Activated CD4-positive, alpha-beta memory T cell treated with anti-CD3 and anti-CD28 coated beads for 36 hours (primary cell): ENCODE measurements at regions of chr2 and their contacts with region 1.

Region 1: DNA sequence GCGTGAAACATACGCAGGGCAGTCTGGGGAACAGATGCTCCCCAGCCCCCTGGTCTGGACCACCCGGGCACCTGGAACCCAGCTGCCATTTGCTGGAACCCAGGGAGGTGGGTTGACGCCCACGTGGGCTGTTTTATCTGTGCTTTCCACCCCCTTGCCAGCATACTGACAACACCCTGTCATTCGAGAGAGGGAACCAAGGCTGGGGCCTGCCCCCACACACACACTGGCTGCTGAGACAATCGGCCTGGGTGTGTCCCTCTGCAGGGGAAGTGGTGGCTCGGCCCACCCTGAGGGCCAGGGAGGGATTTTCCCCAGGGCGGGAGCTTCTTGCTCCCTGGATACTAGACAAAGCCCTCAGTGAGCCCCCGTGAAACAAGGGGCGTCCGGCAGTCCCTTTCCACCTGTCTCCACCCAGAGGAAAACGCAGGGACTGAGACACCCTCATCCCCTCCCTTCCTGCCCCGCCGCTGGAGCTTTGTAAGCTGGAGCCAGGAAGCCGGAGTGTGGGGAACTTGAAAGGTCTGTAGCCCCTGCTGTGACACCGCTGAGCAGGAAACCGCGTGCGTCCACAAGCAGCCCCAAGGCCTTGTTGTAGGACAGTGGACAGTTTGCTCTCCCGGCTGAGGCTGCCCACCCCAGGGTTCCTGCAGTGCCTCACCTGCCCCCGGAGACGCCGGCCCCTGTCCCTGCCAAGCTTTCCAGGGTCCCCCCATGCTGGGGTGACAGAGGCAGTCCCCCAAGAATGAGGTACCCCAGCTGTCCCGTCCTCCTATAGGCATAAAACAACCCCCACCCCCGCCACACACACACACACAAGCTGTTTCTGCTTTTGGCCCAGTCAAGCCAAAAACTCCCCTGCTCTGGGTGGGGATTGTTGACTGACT is 14.1 kb upstream of the KLF11 start:
- DNase-seq: peak; percentile 73
- H3K4me3 Mint-ChIP-seq: no peak overlapping the region
- H3K27ac Mint-ChIP-seq: no peak overlapping the region
- H3K4me1 Mint-ChIP-seq: peaks cover 19% of the 10 kb centered on the region
- H3K27me3 Mint-ChIP-seq: no peaks in the 10 kb centered on the region

Region 2: DNA sequence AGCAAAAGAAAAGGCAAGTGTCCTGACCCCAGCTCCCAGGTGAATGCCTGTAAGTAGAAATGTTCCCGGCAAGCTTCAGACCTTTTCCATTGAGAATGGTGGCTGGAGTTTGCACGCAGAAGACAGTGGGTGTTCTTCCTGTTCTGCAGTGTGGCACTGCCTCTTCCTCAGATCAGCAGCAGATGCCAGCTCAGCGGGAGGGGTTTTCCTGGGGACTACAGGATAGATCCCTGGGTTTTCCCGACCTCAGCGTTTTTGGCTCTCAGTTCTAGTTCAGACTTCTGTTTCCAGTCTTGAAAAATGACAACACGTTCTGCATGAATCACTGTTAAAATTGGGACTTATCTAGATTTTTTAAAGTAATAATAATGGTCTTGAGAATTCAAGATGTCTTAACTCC is 38.5 kb before region 1 on chr2:
- CTCF ChIA-PET with region 1: interaction called, 44 read pairs
- POLR2A ChIA-PET with region 1: no interaction called
- intact Hi-C with region 1: loop called (anchors 5 kb)
- DNase-seq: peak; percentile 33
- H3K4me3 Mint-ChIP-seq: no peak overlapping the region
- H3K27ac Mint-ChIP-seq: no peak overlapping the region
- H3K4me1 Mint-ChIP-seq: peaks cover 17% of the 10 kb centered on the region
- H3K27me3 Mint-ChIP-seq: no peaks in the 10 kb centered on the region